SK-N-SH (cell line): ENCODE measurements at regions of chr3 and their contacts with region 1.

Region 1: GRCh38 chr3:119240591-119241434 is at the start of gene B4GALT4:
- DNase-seq: peak; percentile 94
- H3K4me3 ChIP-seq: peak within 1 kb of the TSS; percentile 73 to 83
- H3K27ac ChIP-seq: peak within 1 kb of the TSS; percentile 79 to 89
- H3K4me1 ChIP-seq: peaks cover 1 to 4% of the 10 kb centered on the region in 2 experiments; a peak in 3 of 4 replicates
- H3K27me3 ChIP-seq: no peaks in the 10 kb centered on the region
- CTCF ChIP-seq: no peak
- EP300 ChIP-seq: no peak
- RAD21 ChIP-seq: no peak
- polyA plus RNA-seq, gene B4GALT4: 15.7 and 19.8 TPM in 2 replicates

Region 2: DNA sequence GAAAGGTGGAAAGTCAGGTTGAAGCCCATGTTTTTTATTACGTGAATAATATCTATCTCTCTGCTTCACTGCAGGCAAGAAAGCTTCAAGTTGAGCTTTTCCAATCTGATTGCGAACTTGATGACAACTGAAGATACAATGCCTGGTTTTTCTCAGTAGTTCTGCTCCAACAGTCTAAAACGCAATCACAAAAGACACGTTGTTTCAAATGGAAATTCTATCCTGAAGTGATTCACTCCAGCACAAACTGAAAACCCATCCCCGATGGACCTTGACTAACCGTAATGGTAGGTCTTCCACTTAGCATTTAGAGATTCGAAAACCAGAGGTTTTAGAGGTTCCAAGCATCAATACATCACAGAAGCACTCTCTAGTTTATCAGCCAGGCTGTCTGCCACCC is 10.7 kb before region 1 on chr3:
- CTCF ChIA-PET with region 1: interaction called, 17 read pairs
- POLR2A ChIA-PET with region 1: no interaction called
- DNase-seq: no peak
- H3K4me3 ChIP-seq: no peak overlapping the region
- H3K27ac ChIP-seq: no peak overlapping the region
- H3K4me1 ChIP-seq: peaks cover 0 to 2% of the 10 kb centered on the region in 2 experiments; a peak in 2 of 4 replicates
- H3K27me3 ChIP-seq: no peaks in the 10 kb centered on the region
- CTCF ChIP-seq: no peak
- EP300 ChIP-seq: no peak
- RAD21 ChIP-seq: no peak

Region 3: GRCh38 chr3:119257682-119258410 is 17.0 kb after region 1 on chr3:
- CTCF ChIA-PET with region 1: interaction called, 13 read pairs
- POLR2A ChIA-PET with region 1: interaction called, 3 read pairs
- DNase-seq: no peak
- H3K4me3 ChIP-seq: no peak overlapping the region
- H3K27ac ChIP-seq: no peak overlapping the region
- H3K4me1 ChIP-seq: peaks cover 0 to 4% of the 10 kb centered on the region in 2 experiments; a peak in 2 of 4 replicates
- H3K27me3 ChIP-seq: no peaks in the 10 kb centered on the region
- CTCF ChIP-seq: no peak
- EP300 ChIP-seq: no peak
- RAD21 ChIP-seq: no peak

Region 4: GRCh38 chr3:119481079-119481478 is 240.3 kb after region 1 on chr3:
- CTCF ChIA-PET with region 1: no interaction called
- POLR2A ChIA-PET with region 1: no interaction called
- DNase-seq: no peak
- H3K4me3 ChIP-seq: no peak overlapping the region
- H3K27ac ChIP-seq: no peak overlapping the region; a peak in 1 of 4 replicates
- H3K4me1 ChIP-seq: no peaks in the 10 kb centered on the region
- H3K27me3 ChIP-seq: no peaks in the 10 kb centered on the region
- CTCF ChIP-seq: no peak
- EP300 ChIP-seq: no peak
- RAD21 ChIP-seq: no peak